ENCODE measurements at regions of chr19 and their contacts with region 1.

Region 1: GRCh38 chr19:42325273-42325895 is at the start of gene MEGF8:
- DNase-seq: peak; percentile 94 to 99 (median 98)
- H3K4me3 ChIP-seq: peak within 1 kb of the TSS; percentile 53 to 100 (median 92)
- H3K27ac ChIP-seq: peak within 1 kb of the TSS in 55 of 59 donors; percentile 21 to 90 (median 77)
- H3K27me3 ChIP-seq: no peaks in the 10 kb centered on the region
- CTCF ChIP-seq: peak; percentile 77 to 98 (median 92)
- total RNA-seq, gene MEGF8: 53.4 to 167 (median 109) TPM

Region 2: DNA sequence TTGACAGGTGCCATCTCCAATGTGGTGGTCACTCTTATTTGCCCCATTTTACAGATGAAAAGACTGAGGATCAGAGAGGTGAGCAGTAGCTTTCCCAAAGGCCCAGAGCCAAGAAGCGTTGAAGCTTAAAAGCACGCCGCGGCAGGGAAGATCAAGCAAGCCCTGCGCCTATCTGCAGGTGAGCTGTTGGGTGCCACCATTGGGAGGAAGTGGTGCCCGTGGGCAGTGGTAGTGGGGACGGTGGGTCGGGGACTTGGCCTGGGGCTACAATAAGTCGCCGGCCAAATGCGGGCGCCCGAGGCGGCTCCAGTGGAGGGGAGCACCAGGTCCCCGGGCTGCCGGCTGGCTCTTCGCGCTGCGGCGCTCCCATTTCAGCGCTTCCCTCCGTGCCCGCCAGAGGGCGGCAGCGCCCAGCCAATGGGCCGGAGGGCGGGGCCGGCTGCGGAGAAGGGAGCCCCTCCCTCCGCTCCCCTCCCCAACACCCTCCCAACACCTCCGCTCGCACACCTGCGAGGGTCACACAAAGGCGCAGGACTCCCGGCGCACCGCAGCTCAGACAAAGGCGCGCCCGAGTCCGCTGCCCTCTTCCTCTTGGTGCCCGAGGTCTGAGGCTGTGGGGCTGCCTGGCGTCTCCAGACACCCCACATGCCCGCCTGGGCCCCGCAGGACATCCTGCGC is 192.4 kb before region 1 on chr19:
- intact Hi-C with region 1: loop called in 1 of 2 experiments (anchors 10 kb)
- DNase-seq: peak in 9 of 10 donors; percentile 53 to 89 (median 65)
- H3K4me3 ChIP-seq: peak overlapping the region; percentile 23 to 67 (median 48)
- H3K27ac ChIP-seq: peak overlapping the region in 13 of 59 donors; percentile 5 to 63 (median 27)
- H3K27me3 ChIP-seq: peaks cover 0 to 21% (median 5%) of the 10 kb centered on the region in 45 donors
- CTCF ChIP-seq: peak; percentile 74 to 99 (median 98)

Region 3: GRCh38 chr19:42283143-42284065 is 42.0 kb before region 1 on chr19:
- intact Hi-C with region 1: loop called (anchors 2 to 5 kb)
- DNase-seq: peak; percentile 93 to 97 (median 96)
- H3K4me3 ChIP-seq: peak overlapping the region; percentile 37 to 90 (median 65)
- H3K27ac ChIP-seq: peak overlapping the region; percentile 95 to 100 (median 99)
- H3K27me3 ChIP-seq: no peaks in the 10 kb centered on the region
- CTCF ChIP-seq: peak in 33 of 56 donors; percentile 13 to 56 (median 29)

Region 4: GRCh38 chr19:42313840-42314755 is 11.3 kb before region 1 on chr19:
- intact Hi-C with region 1: loop called in 1 of 2 experiments (anchors 1 kb)
- DNase-seq: no peak
- H3K4me3 ChIP-seq: peak overlapping the region; percentile 56 to 86 (median 73)
- H3K27ac ChIP-seq: peak overlapping the region in 47 of 59 donors; percentile 29 to 88 (median 76)
- H3K27me3 ChIP-seq: no peaks in the 10 kb centered on the region
- CTCF ChIP-seq: no peak

Region 5: GRCh38 chr19:42396381-42397262 is 71.2 kb after region 1 on chr19:
- intact Hi-C with region 1: loop called in 1 of 2 experiments (anchors 5 kb)
- DNase-seq: peak; percentile 95 to 99 (median 99)
- H3K4me3 ChIP-seq: peak overlapping the region; percentile 46 to 87 (median 71)
- H3K27ac ChIP-seq: peak overlapping the region in 58 of 59 donors; percentile 2 to 94 (median 83)
- H3K27me3 ChIP-seq: peaks cover 0 to under 1% (median 0%) of the 10 kb centered on the region in 45 donors
- CTCF ChIP-seq: peak in 21 of 56 donors; percentile 6 to 54 (median 22)

Region 6: GRCh38 chr19:42409477-42409876 is 84.1 kb after region 1 on chr19:
- intact Hi-C with region 1: no loop called
- DNase-seq: no peak
- H3K4me3 ChIP-seq: peak overlapping the region in 44 of 59 donors; percentile 7 to 75 (median 50)
- H3K27ac ChIP-seq: peak overlapping the region in 55 of 59 donors; percentile 26 to 99 (median 96)
- H3K27me3 ChIP-seq: no peaks in the 10 kb centered on the region
- CTCF ChIP-seq: no peak

Region 7: DNA sequence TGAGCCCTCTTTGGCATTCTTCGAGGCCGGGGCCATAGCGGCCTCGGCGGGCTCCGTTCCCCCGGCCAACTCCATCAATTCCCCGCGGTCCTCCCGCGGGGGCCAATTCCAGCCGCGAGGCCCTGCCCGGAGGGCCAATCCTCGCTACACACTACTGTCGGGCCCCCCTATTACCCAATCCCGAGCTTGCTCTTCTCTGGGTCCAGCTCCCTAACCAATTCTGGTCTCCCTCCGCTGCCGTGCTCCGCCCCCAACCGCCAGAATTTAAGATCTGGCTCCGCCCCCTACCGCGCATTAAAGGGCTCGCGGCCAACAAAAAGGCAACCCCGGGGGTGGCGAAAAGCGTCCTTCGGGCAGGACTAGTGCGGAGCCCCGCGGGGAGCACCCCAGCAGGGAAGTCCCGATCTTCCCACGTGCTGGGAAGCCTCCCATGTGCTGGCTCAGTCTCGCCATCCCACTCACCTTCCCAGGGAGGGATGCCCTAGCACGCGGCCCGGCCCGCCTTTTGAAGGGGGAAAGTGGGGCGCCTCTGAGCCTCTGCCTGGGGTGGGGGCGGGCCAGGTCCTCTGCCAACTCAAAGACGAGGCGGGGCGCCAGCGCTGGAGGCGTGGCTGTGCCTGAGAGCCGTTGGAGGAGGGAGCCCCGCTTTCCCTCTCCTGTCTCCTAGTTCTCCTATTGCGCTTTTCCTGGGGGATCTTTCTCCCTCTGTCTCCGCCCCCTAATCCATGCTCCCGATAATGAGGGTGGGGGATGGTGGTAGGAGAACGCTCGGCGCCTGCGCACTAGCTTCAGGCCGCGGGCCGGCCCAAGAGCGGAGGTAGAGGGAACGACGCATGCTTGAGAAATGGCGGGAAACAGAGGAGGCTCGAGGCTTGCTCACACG is 98.3 kb after region 1 on chr19:
- intact Hi-C with region 1: loop called in 1 of 2 experiments (anchors 5 kb)
- DNase-seq: peak; percentile 80 to 96 (median 94)
- H3K4me3 ChIP-seq: peak overlapping the region; percentile 60 to 100 (median 84)
- H3K27ac ChIP-seq: peak overlapping the region; percentile 0 to 96 (median 88)
- H3K27me3 ChIP-seq: no peaks in the 10 kb centered on the region
- CTCF ChIP-seq: peak in 32 of 56 donors; percentile 7 to 63 (median 32)

Region 8: DNA sequence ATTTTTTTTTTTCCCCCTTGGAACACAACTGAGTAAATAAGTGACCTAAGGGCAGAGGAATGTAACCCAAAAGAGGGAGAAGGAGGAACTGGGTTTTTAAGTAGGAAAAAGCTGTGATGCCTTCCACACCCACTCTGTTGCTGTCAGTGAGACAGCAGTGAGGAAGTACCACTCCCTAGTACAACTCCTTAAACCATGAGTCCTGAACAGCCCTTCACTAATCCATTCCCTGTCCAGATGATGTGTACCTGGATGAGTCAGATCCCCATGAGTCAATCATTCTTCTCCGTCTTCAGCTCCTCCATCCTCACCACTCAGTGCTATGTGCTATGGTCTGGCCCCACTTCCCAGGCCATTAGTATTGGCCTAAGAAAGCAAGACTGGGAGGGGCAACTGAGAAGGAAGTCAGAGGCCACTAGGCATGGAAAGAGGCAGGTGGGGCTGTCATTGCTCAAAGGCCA is 130.3 kb after region 1 on chr19:
- intact Hi-C with region 1: no loop called
- DNase-seq: no peak
- H3K4me3 ChIP-seq: no peak overlapping the region
- H3K27ac ChIP-seq: no peak overlapping the region
- H3K27me3 ChIP-seq: no peaks in the 10 kb centered on the region
- CTCF ChIP-seq: no peak